ENCODE measurements at regions of chr2 and their contacts with region 1.

Region 1: DNA sequence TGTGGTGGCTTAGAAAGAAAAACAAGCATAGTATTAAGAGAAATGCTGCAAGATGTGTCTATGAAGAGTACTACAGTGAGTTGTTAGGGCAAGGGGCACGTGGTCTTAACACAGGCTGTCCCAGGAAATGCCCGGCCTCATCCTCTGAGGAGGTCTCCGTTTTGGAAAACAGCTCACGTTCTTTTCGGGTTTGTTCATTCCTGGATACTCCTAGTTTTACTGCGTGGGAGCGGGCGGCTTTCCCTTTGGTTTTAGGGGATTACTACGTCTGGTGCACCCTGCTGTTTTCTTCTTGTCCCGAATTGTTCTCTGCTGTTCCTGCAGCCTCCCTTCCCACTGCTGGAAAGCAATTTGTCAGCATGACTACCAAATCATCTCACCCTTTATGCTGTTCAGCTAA is 55.5 kb upstream of the RAB6D start:
- DNase-seq: no peak
- ATAC-seq: no peak
- H3K4me3 ChIP-seq: no peak overlapping the region
- H3K4me3 Mint-ChIP-seq: no peak overlapping the region
- H3K27ac ChIP-seq: no peak overlapping the region
- H3K27ac Mint-ChIP-seq: no peak overlapping the region
- H3K4me1 ChIP-seq: no peaks in the 10 kb centered on the region
- H3K4me1 Mint-ChIP-seq: no peaks in the 10 kb centered on the region
- H3K27me3 ChIP-seq: no peaks in the 10 kb centered on the region
- H3K27me3 Mint-ChIP-seq: peaks cover 32% of the 10 kb centered on the region
- CTCF ChIP-seq: no peak

Region 2: DNA sequence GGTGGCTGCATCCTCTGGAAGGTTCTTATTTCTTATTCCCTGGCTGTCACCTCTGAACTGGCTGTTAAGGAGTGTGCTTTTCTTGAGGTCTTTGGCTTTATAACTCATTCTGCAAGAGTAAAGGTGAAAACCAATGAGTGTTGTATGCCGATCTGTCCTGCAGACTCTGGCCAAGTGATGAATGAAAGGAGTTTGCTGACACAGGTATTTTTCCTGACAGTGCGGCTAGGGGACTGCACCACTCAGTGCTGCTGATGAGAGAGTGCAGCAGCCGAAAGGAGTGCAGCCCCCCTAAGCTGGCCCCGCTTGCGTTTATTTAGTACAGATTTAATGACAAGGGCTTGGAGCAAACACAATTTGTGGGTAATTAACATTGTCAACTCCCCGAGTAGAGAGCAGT is 97.2 kb before region 1 on chr2:
- CTCF ChIA-PET with region 1: no interaction called
- POLR2A ChIA-PET with region 1: no interaction called
- intact Hi-C with region 1: no loop called
- DNase-seq: no peak
- ATAC-seq: no peak
- H3K4me3 ChIP-seq: no peak overlapping the region
- H3K4me3 Mint-ChIP-seq: no peak overlapping the region
- H3K27ac ChIP-seq: no peak overlapping the region
- H3K27ac Mint-ChIP-seq: no peak overlapping the region
- H3K4me1 ChIP-seq: no peaks in the 10 kb centered on the region
- H3K4me1 Mint-ChIP-seq: no peaks in the 10 kb centered on the region
- H3K27me3 ChIP-seq: no peaks in the 10 kb centered on the region
- H3K27me3 Mint-ChIP-seq: peaks cover 6% of the 10 kb centered on the region
- CTCF ChIP-seq: no peak

Region 3: DNA sequence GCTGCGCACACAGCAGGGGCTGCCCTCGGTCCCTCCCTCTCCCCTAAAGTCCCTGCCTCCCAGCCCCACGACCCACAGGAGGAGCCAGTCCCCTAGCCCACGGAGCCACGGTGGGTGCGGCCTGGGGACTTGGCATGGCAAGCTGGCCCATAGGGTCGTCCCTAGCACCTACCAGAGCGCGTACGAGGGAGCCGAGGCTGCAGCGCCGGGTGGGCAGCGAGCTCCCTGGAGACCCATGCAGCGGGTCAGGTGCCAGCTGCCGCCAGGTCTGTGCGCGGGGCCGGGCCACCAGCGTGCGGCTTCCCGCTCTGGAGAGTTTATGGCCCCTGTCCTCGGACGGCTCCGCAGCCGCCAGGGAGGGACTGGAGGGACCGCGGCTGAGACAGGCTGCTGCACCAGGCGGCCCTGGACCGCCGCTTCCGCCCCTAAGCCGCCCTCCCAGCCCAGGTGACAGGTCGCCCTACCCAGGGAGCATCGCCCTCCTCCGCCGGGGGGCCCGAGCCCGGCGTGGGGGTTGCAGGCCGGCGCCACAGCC is 381.8 kb after region 1 on chr2:
- CTCF ChIA-PET with region 1: no interaction called
- POLR2A ChIA-PET with region 1: no interaction called
- intact Hi-C with region 1: loop called in 1 of 2 experiments (anchors 5 kb)
- DNase-seq: peak in 2 of 9 experiments; percentile 12 to 14
- ATAC-seq: no peak
- H3K4me3 ChIP-seq: no peak overlapping the region
- H3K4me3 Mint-ChIP-seq: peak overlapping the region; percentile 5
- H3K27ac ChIP-seq: no peak overlapping the region
- H3K27ac Mint-ChIP-seq: no peak overlapping the region
- H3K4me1 ChIP-seq: no peaks in the 10 kb centered on the region
- H3K4me1 Mint-ChIP-seq: peaks cover 3% of the 10 kb centered on the region
- H3K27me3 ChIP-seq: peaks cover 0 to 3% of the 10 kb centered on the region in 2 experiments
- H3K27me3 Mint-ChIP-seq: peaks cover 8% of the 10 kb centered on the region
- CTCF ChIP-seq: no peak

Measured in CD8-positive, alpha-beta T cell (primary cell).